ENCODE measurements at regions of chr4 and their contacts with region 1.

Region 1: GRCh38 chr4:87006676-87007527 is 72.1 kb downstream of the AFF1 start:
- DNase-seq: peak; percentile 87
- H3K4me3 Mint-ChIP-seq: peak overlapping the region; percentile 98
- H3K27ac Mint-ChIP-seq: peak overlapping the region; percentile 96
- H3K4me1 Mint-ChIP-seq: peaks cover 52% of the 10 kb centered on the region
- H3K27me3 Mint-ChIP-seq: no peaks in the 10 kb centered on the region

Region 2: GRCh38 chr4:86934771-86935565 is 71.9 kb before region 1 on chr4 and contains the start of gene AFF1:
- intact Hi-C with region 1: loop called (anchors 1 kb)
- DNase-seq: peak; percentile 86
- H3K4me3 Mint-ChIP-seq: peak within 1 kb of the TSS; percentile 89
- H3K27ac Mint-ChIP-seq: peak within 1 kb of the TSS; percentile 97
- H3K4me1 Mint-ChIP-seq: peaks cover 48% of the 10 kb centered on the region
- H3K27me3 Mint-ChIP-seq: no peaks in the 10 kb centered on the region
- total RNA-seq, gene AFF1: 44.7 and 47.0 TPM in 2 replicates

Region 3: DNA sequence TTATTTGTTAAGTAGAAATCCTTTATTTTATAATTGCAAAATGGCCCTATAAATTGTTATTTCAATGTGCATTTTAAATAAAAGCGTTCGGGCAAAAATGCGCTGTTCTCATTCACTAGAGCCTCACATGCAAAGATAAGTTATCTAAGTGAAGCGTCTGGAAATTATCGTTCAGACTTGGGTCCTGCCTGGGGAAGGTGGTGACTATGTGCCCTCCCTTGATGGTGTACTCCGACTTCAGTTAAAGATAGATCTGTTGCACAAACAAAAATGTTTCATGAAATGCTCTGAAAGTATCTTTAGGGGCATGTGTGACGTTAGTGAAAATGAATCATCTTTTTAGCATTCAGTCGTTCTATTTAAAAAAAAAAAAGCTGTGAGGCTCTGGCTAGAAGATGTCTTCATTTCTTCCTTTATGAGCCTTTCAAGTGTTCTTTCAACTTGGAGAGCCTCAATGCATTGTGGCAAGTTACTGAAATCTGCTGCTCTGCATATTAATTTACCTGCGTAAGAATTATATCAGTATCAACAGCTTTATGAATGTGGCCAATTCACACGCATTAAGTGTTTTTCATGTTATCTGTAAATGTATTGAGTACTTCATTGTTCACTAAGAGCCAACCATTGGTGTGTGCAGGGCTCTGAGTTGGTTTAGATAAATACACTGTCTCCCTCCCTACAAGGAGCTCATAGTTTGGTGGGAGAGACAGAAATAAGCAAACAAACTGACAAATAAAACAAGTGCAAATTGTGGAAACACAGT is 10.9 kb after region 1 on chr4:
- intact Hi-C with region 1: loop called (anchors 1 kb)
- DNase-seq: no peak
- H3K4me3 Mint-ChIP-seq: no peak overlapping the region
- H3K27ac Mint-ChIP-seq: peak overlapping the region; percentile 14
- H3K4me1 Mint-ChIP-seq: peaks cover 81% of the 10 kb centered on the region
- H3K27me3 Mint-ChIP-seq: no peaks in the 10 kb centered on the region

Region 4: GRCh38 chr4:87093443-87094123 is 86.7 kb after region 1 on chr4:
- intact Hi-C with region 1: loop called (anchors 1 kb)
- DNase-seq: peak; percentile 22
- H3K4me3 Mint-ChIP-seq: no peak overlapping the region
- H3K27ac Mint-ChIP-seq: peak overlapping the region; percentile 62
- H3K4me1 Mint-ChIP-seq: peaks cover 25% of the 10 kb centered on the region
- H3K27me3 Mint-ChIP-seq: no peaks in the 10 kb centered on the region

Region 5: DNA sequence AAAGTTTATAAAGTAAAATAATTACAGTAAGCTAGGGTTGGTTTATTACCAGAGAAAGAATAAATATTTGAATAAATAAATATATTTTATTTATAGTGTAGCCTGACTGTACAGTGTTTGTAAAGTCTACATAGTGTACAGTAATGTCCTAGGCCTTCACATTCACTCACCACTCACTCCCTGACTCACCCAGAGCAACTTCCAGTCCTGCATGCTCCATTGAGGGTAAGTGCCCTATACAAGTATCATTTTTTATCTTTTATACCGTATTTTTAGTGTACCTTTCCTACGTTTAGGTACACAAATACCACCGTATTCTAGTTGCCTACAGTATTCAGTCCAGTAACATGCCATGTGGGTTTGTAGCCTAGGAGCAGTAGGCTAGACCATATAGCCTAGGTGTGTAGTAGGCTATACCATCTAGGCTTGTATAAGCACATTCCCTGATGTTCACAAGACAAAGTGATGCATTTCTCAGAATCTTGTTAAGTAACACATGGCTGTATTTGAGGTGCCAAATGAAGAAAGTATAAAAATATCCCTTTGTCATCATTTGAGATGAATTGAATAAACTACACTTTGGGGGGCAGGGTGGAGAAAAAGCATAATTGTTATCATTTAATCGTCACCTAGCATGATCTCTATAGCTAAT is 228.2 kb after region 1 on chr4:
- intact Hi-C with region 1: loop called (anchors 2 kb)
- DNase-seq: no peak
- H3K4me3 Mint-ChIP-seq: no peak overlapping the region
- H3K27ac Mint-ChIP-seq: no peak overlapping the region
- H3K4me1 Mint-ChIP-seq: peaks cover 7% of the 10 kb centered on the region
- H3K27me3 Mint-ChIP-seq: peaks cover 14% of the 10 kb centered on the region